Activated CD4-positive, alpha-beta T cell treated with anti-CD3 and anti-CD28 coated beads, Interleukin-2, amount 10 ng/mL, durations not matched to agents 24 days and 14 days (primary cell): ENCODE measurements at regions of chr13 and their contacts with region 1.

Region 1: DNA sequence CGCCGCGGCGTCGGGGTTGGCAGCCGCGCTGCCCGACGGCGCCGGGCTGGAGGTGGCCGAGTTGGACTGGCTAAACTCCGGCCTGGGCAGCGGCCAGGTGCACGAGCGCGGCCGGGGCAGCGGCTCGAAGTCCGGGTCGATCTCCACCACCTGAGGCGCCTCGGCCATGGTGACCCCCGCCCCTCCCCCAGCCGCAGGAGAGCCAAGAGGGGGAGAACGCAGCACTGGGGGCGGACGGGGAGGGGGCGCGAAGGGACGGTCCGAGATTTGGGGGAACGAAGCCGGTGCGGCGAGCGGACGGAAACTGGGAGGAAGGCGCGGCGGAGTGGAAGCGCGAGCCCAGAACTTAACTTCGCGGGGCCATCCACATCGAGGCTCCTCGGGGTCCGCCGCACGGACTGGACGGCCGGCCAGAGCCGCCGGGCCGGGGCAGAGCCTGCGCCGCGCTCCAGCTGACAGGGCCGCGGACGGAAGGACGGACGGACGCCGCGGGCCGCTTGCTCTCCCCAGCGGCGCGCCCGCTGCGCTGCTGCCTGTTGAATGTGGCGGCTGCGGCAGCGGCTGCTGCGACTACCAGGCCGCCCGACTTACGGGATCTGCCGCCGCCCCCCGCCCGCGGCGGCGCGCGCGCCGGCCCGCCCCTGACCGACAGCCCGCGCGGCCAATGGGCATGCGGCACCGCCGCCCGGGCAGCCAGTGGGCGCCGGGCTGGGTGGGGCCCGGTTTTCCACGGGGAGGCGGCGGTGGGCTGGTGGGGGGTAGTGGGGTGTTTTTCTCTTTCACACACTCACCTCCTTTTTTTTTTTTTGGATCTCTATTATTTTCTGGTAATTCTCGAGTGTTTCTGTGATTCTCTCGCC is at the start of gene FOXO1:
- DNase-seq: peak; percentile 97
- H3K4me3 Mint-ChIP-seq: peak within 1 kb of the TSS; percentile 93
- H3K27ac Mint-ChIP-seq: peak within 1 kb of the TSS; percentile 95
- H3K4me1 Mint-ChIP-seq: peaks cover 35% of the 10 kb centered on the region
- H3K27me3 Mint-ChIP-seq: no peaks in the 10 kb centered on the region
- total RNA-seq, gene FOXO1: 38.1 and 39.6 TPM in 2 replicates

Region 2: DNA sequence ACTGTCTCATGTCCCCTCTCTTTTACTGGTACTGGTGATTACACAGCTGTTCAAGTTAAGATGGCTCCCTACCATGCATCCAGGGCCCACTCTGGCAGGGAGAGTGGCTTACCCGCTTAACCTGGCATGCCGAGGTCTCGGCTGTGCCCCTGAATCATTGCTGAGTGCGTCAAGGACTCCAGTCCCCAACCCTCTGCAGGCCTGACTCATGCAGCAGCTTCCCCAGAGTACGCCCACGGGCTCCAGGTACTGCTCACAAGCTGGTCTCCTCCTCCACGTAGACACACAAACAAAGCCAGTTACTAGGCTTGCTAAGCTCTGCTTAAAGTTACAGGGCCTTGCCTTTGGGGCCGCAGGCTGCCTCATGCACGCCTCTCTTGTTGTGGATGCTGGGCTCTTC is 563.4 kb before region 1 on chr13:
- intact Hi-C with region 1: loop called (anchors 2 kb)
- DNase-seq: peak; percentile 84
- H3K4me3 Mint-ChIP-seq: peak overlapping the region; percentile 75
- H3K27ac Mint-ChIP-seq: peak overlapping the region; percentile 93
- H3K4me1 Mint-ChIP-seq: peaks cover 50% of the 10 kb centered on the region
- H3K27me3 Mint-ChIP-seq: no peaks in the 10 kb centered on the region

Region 3: DNA sequence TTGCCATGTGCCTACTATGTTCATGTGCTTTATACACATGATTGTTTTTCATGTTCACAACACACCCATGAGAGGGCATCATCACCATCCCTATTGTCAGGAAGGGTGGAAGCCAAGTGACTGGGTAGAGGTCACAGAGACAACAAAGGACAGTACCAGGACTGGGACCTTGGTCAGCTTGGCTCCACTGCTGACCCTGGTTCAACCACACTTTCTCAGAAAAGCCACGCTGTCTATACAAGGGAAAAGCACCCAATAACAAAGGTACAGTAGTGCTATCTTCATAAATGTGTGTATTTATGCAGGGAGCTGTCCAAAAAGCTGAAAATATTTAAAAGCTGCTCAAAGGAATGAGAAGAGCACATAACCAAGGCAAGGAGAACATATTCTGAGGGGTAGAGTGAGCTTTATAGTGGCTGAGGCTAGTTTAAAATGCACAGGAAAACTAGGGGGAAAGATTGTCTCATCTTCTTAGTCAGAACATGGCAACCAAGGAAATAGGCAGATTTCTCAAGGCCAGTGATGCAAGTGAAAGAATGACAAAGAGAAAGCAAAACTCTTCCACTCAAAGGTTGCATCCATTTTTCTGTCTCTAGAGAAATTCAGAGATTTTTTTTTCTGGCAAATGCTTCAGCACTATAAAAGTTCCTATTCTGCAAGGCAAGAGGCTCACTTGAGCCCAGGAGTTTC is 414.8 kb before region 1 on chr13:
- intact Hi-C with region 1: loop called (anchors 5 kb)
- DNase-seq: peak; percentile 68
- H3K4me3 Mint-ChIP-seq: peak overlapping the region; percentile 48
- H3K27ac Mint-ChIP-seq: peak overlapping the region; percentile 83
- H3K4me1 Mint-ChIP-seq: peaks cover 24% of the 10 kb centered on the region
- H3K27me3 Mint-ChIP-seq: no peaks in the 10 kb centered on the region

Region 4: GRCh38 chr13:40438999-40439797 is 227.1 kb before region 1 on chr13:
- intact Hi-C with region 1: loop called (anchors 5 kb)
- DNase-seq: peak; percentile 74
- H3K4me3 Mint-ChIP-seq: peak overlapping the region; percentile 61
- H3K27ac Mint-ChIP-seq: peak overlapping the region; percentile 50
- H3K4me1 Mint-ChIP-seq: peaks cover 36% of the 10 kb centered on the region
- H3K27me3 Mint-ChIP-seq: no peaks in the 10 kb centered on the region

Region 5: GRCh38 chr13:40644838-40645604 is 21.3 kb before region 1 on chr13:
- intact Hi-C with region 1: loop called (anchors 2 kb)
- DNase-seq: no peak
- H3K4me3 Mint-ChIP-seq: peak overlapping the region; percentile 36
- H3K27ac Mint-ChIP-seq: peak overlapping the region; percentile 54
- H3K4me1 Mint-ChIP-seq: peaks cover 77% of the 10 kb centered on the region
- H3K27me3 Mint-ChIP-seq: no peaks in the 10 kb centered on the region

Region 6: DNA sequence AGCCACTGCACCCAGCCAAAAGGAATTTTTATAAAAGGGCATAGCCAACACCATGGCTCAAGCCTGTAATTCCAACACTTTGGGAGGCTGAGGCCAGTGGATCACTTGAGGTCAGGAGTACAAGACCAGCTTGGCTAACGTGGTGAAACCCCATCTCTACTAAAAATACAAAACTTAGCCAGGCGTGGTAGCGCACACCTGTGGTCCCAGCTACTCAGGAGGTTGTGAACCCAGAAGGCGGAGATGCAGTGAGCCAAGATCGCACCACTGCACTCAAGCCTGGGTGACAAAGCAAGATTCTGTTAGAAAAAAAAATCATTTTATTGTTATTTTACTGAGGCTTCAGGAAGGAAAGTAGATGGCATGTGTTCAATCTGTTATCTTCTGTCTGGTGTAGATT is 31.4 kb after region 1 on chr13:
- intact Hi-C with region 1: no loop called
- DNase-seq: no peak
- H3K4me3 Mint-ChIP-seq: no peak overlapping the region
- H3K27ac Mint-ChIP-seq: no peak overlapping the region
- H3K4me1 Mint-ChIP-seq: peaks cover 3% of the 10 kb centered on the region
- H3K27me3 Mint-ChIP-seq: no peaks in the 10 kb centered on the region

Region 7: GRCh38 chr13:40764587-40765403 is 98.5 kb after region 1 on chr13:
- intact Hi-C with region 1: no loop called
- DNase-seq: peak; percentile 69
- H3K4me3 Mint-ChIP-seq: peak overlapping the region; percentile 59
- H3K27ac Mint-ChIP-seq: peak overlapping the region; percentile 96
- H3K4me1 Mint-ChIP-seq: peaks cover 42% of the 10 kb centered on the region
- H3K27me3 Mint-ChIP-seq: no peaks in the 10 kb centered on the region

Region 8: GRCh38 chr13:40863723-40864122 is 197.4 kb after region 1 on chr13:
- intact Hi-C with region 1: no loop called
- DNase-seq: no peak
- H3K4me3 Mint-ChIP-seq: no peak overlapping the region
- H3K27ac Mint-ChIP-seq: no peak overlapping the region
- H3K4me1 Mint-ChIP-seq: no peaks in the 10 kb centered on the region
- H3K27me3 Mint-ChIP-seq: no peaks in the 10 kb centered on the region

Region 9: DNA sequence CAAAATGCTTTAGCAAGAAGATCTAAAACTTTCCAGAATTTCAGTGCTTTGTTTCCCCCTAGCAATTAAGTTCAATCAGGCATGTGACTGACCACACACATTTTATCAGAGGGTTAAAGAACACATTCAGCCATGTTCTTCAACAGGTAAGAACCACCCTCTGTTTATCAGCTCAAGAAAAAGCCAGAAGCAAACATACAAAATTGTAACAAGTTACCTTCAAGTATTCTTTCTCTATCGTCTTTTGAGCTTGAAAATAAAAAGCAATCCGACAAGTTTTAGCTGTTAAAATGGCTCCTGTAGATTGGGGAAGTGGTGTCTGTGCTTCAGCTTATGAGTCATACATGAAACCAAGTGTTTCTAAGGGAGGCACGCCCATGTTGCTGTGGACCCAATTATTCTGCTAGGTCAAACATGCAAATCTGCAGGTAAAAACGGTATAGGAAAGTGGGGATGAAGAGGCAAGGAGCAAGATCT is 352.8 kb after region 1 on chr13 and contains the start of gene ELF1:
- intact Hi-C with region 1: loop called (anchors 5 kb)
- DNase-seq: peak; percentile 89
- H3K4me3 Mint-ChIP-seq: peak within 1 kb of the TSS; percentile 95
- H3K27ac Mint-ChIP-seq: peak within 1 kb of the TSS; percentile 98
- H3K4me1 Mint-ChIP-seq: peaks cover 40% of the 10 kb centered on the region
- H3K27me3 Mint-ChIP-seq: no peaks in the 10 kb centered on the region
- total RNA-seq, gene ELF1: 65.0 and 65.8 TPM in 2 replicates